ENCODE measurements at regions of chr15 and their contacts with region 1.

Region 1: GRCh38 chr15:24318981-24319380 is 356.6 kb upstream of the NPAP1 start:
- DNase-seq: no peak
- H3K4me3 ChIP-seq: no peak overlapping the region
- H3K27ac ChIP-seq: no peak overlapping the region
- H3K4me1 ChIP-seq: no peaks in the 10 kb centered on the region
- H3K27me3 ChIP-seq: no peaks in the 10 kb centered on the region
- CTCF ChIP-seq: no peak
- POLR2A ChIP-seq: no peak

Region 2: DNA sequence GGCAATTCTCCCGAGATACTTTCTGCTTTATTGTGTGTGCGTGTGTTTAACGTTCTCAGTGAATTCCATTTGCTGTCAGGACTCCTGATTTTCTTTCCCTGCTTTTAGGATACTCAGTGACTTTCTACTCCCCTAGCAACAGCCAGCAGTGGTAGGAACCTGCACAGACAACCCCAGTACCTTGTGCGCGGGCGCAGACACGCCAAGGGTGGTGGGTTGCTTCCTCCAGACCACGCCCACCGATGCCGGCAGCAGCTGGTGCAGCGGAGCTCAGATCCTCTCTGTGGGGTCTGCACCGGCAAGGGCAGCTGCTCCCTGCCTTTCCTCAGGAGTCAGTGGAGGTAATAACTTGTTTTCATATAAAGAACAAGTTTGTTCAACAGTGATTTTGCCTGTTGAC is 406.8 kb before region 1 on chr15:
- intact Hi-C with region 1: no loop called
- DNase-seq: no peak
- H3K4me3 ChIP-seq: no peak overlapping the region
- H3K27ac ChIP-seq: no peak overlapping the region
- H3K4me1 ChIP-seq: no peaks in the 10 kb centered on the region
- H3K27me3 ChIP-seq: no peaks in the 10 kb centered on the region
- CTCF ChIP-seq: no peak
- POLR2A ChIP-seq: no peak

Region 3: GRCh38 chr15:24078310-24079029 is 240.5 kb before region 1 on chr15:
- intact Hi-C with region 1: no loop called
- DNase-seq: no peak
- H3K4me3 ChIP-seq: no peak overlapping the region
- H3K27ac ChIP-seq: no peak overlapping the region
- H3K4me1 ChIP-seq: no peaks in the 10 kb centered on the region
- H3K27me3 ChIP-seq: no peaks in the 10 kb centered on the region
- CTCF ChIP-seq: no peak
- POLR2A ChIP-seq: no peak

Region 4: DNA sequence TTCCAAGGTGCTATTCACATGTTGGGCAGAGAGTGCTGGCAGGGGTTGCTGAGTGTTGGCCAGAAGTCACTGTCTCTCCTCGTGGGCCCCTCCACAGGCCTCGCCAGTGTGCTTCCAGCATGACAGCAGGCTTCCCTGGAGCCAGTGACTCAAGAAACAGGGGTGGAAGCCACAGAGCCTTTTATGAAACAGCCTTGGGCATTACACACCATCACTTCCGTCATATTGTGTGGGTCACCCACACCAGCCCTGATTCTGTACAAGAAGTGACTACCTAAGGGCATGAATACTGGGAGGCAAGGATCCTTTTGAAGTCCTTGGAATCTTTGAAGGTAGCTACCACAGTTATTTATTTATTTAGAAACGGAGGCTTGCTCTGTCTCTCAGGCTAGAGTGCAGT is 1297.5 kb after region 1 on chr15:
- intact Hi-C with region 1: loop called (anchors 5 kb)
- DNase-seq: no peak
- H3K4me3 ChIP-seq: no peak overlapping the region
- H3K27ac ChIP-seq: no peak overlapping the region
- H3K4me1 ChIP-seq: no peaks in the 10 kb centered on the region
- H3K27me3 ChIP-seq: no peaks in the 10 kb centered on the region
- CTCF ChIP-seq: no peak
- POLR2A ChIP-seq: no peak